HepG2 (cell line): ENCODE measurements at regions of chr20 and their contacts with region 1.

Region 1: DNA sequence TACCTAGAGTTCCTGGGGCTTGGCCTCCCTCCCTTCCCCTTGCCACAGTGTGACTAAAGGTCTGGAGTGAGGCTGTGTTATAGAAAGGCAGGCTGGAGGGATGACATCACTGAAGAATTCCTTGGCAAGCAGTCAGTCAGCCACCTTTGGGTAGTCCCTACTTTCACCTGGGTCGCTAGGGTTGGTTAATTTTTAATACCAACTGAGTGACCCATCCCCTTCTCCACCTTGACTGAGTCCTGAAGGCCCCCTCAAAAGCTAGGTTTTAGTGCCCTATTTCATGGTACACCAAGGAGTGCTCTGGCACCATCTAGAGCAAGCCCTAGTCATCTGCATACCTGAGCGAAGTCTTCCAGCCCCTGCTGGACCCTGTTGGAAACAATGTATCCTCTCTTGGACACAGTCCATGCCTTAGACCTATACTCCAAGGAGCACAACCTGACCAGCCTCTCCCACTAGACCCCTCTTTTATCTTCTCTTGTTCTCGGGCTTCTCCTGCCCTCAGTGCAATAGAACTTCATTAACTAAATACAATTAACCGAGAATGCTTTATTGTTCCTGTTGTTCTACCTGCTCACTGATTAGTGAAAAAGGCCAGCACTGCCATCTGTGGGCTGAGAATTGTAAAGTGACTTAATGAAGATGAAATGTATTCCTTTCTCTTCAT is 44.6 kb downstream of the RIN2 start:
- DNase-seq: peak; percentile 75
- ATAC-seq: peak; percentile 100
- H3K4me3 ChIP-seq: no peak overlapping the region
- H3K27ac ChIP-seq: no peak overlapping the region
- H3K4me1 ChIP-seq: no peaks in the 10 kb centered on the region
- H3K27me3 ChIP-seq: no peaks in the 10 kb centered on the region
- CTCF ChIP-seq: peak; percentile 72
- EP300 ChIP-seq: no peak
- POLR2A ChIP-seq: no peak
- RAD21 ChIP-seq: peak; percentile 51

Region 2: DNA sequence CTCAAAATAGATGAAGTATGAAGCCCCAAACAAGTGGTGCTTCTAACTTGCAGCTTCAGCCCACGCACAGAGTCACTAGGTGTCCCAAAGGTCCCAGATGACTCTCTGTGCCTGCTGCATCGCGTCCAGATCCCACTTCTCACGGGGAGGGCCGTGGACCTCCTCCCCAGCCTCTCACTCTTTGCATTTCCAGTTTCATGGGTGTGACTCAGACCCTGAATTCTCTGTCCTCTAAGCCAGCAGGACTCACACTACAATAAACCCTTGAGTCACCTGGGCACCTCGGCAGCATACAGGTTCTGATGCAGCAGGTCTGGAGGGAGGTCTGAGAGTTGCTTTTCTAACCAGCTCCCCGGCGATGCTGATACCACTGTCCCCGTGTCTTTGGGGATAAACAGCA is 158.5 kb before region 1 on chr20:
- CTCF ChIA-PET with region 1: no interaction called
- POLR2A ChIA-PET with region 1: no interaction called
- in situ Hi-C with region 1: no loop called
- intact Hi-C with region 1: no loop called
- DNase-seq: no peak
- ATAC-seq: no peak
- H3K4me3 ChIP-seq: no peak overlapping the region
- H3K27ac ChIP-seq: no peak overlapping the region
- H3K4me1 ChIP-seq: peaks cover 5% of the 10 kb centered on the region
- H3K27me3 ChIP-seq: peaks cover 0 to 5% of the 10 kb centered on the region in 2 experiments; a peak in 3 of 5 replicates
- CTCF ChIP-seq: no peak
- EP300 ChIP-seq: no peak
- POLR2A ChIP-seq: no peak
- RAD21 ChIP-seq: no peak

Region 3: GRCh38 chr20:19784511-19785172 is 18.0 kb before region 1 on chr20:
- CTCF ChIA-PET with region 1: interaction called, 6 read pairs
- POLR2A ChIA-PET with region 1: no interaction called
- in situ Hi-C with region 1: no loop called
- intact Hi-C with region 1: loop called (anchors 2 kb)
- DNase-seq: peak; percentile 75
- ATAC-seq: peak; percentile 91
- H3K4me3 ChIP-seq: 0 out of 6 replicates have a peak overlapping the region, but pooled peaks of 1 of the 3 experiments have one; percentile 2
- H3K27ac ChIP-seq: no peak overlapping the region
- H3K4me1 ChIP-seq: peaks cover 14% of the 10 kb centered on the region
- H3K27me3 ChIP-seq: no peaks in the 10 kb centered on the region
- CTCF ChIP-seq: peak; percentile 88
- EP300 ChIP-seq: no peak
- POLR2A ChIP-seq: no peak
- RAD21 ChIP-seq: peak; percentile 72